PC-3 (cell line): ENCODE measurements at regions of chr9 and their contacts with region 1.

Region 1: DNA sequence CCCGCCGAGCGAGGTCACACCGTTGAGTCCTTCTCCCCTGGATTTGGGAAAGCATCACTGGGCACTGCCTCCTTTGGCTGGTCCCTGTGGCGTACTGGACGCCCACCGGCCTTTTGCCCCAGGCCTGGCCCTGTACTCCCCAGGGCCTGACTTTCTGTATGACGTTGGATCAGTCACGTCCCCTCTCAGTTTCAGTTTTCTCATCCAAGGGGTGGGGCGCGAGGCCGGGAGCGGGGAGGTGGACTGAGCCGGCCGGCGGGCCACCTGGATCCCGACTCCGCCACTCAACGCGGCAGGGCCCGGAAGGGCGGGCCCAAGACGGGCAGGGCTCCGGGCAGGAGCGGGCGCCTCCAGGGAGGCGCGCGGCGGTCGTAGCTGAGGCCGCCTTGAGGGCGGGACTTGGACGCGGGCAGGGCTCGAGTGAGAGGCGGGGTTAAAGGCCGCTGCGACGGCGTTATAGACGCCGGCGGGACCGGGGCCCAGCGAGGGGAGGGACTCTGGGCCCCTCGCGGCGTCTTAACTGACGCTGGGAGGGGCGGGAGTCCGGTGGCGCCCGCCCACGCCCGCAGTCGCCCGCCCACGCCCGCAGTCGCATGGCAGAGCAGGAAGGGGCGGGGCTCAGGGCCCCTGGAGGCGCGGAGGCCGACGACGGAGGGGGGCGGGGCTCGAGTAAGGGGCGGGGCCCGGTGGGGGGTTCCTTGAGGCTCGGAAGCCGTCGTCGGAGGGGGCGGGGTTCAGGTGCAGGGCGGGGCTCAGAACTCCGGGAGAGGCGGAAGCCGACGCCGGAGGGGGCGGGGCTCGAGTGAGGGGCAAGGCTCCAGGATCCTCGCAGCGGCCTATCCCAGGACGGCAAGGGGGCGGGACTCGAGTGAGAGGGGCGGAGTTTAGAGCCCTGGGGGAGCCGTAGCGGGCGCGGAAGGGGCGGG is 549 bp upstream of the CARD19 start:
- DNase-seq: peak; percentile 96
- ATAC-seq: peak; percentile 74
- H3K4me3 ChIP-seq: peak overlapping the region; percentile 64
- H3K27ac ChIP-seq: peak overlapping the region; percentile 75
- H3K4me1 ChIP-seq: peaks cover 28% of the 10 kb centered on the region
- H3K27me3 ChIP-seq: no peaks in the 10 kb centered on the region
- CTCF ChIP-seq: no peak

Region 2: DNA sequence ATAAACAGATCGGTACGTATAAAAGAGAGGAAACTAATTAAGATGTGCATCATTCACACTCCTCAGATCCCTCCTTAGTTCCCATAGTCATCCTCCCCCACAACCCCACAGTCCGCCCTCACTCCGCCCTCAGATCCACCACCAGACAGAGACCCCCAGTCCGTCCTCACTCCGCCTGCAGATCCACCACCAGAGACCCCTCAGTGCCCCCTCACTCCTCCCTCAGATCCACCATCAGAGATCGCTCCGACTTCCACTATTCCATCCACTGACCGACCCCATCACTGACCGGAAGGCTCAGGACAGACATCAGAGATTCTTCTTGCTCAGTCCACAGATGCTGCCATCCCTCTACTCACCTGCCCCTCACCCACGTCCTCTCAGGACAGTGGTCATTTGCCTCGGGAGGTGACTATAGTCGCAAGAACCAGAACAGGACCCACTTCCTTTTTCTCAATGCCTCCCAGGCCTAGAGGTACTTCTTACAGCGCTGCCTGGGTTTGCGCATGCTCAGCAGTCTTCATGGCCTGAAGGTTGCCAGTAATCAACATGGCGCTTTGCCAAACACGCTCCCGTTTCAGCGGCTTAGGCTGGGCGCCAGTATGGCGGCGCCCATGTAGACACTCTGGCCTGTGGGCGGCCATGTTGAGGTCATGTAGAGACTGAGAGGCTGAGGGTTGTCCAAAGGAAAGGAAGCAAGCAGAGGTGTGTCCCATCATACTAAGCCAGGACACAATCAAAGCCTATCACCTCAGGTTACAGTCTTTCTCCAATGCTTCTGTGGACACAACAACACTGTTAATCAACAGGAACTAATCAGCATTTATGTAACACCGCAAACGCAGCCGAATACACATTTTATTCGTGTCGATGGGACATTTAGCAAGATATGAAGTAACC is 217.7 kb before region 1 on chr9 and contains the start of gene ZNF484:
- CTCF ChIA-PET with region 1: no interaction called
- POLR2A ChIA-PET with region 1: no interaction called
- intact Hi-C with region 1: loop called (anchors 10 kb)
- DNase-seq: peak; percentile 98
- ATAC-seq: peak; percentile 99
- H3K4me3 ChIP-seq: peak within 1 kb of the TSS; percentile 96
- H3K27ac ChIP-seq: 0 out of 2 replicates have a peak within 1 kb of the TSS, but pooled peaks have one; percentile 24
- H3K4me1 ChIP-seq: peaks cover 12% of the 10 kb centered on the region; the same call in 1 of the 2 replicates
- H3K27me3 ChIP-seq: no peaks in the 10 kb centered on the region
- CTCF ChIP-seq: no peak
- total RNA-seq, gene ZNF484: 3.8 and 3.9 TPM in 2 replicates

Region 3: DNA sequence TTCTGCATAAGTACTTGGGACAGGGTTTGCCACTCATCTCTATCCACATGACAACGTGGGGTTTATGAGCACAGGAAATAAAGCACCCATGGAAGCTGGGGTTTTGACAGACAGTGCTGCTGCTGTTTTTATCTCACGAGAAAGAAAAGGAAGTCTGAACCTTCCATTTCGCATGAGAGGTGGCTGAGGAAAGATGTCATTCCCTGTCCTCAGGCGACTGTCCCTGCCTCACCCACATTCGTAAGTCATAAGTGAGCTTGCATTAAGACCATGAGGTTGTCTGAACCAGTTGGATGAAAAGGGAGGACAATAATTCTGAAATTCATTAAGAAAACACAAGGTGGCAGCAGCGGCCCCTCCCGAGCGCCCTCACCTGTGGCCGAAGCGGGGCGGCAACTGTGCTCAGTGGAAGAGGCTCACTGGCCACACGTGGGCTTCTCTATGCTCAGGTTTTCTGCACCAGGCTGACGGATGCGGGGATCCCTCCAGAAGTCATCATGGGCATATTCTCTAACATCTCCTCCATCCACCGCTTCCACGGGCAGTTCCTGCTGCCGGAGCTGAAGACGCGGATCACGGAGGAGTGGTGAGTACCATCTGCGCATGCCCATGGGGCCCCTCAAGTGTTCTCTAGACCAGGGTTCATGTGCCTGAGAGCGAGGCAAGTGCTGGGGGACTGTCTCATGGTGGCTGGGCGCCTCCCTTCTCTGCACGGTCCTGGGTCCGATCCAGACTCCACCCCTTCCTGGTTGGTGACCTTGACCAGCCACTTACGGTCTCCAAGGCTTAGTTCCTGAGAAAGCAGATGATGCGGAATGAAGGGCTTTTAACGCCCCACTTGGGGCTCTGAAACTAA is 91.7 kb before region 1 on chr9:
- CTCF ChIA-PET with region 1: no interaction called
- POLR2A ChIA-PET with region 1: no interaction called
- intact Hi-C with region 1: loop called (anchors 2 kb)
- DNase-seq: peak; percentile 72
- ATAC-seq: peak; percentile 94
- H3K4me3 ChIP-seq: peak overlapping the region; percentile 67
- H3K27ac ChIP-seq: no peak overlapping the region
- H3K4me1 ChIP-seq: peaks cover 4% of the 10 kb centered on the region; the same call in 1 of the 2 replicates
- H3K27me3 ChIP-seq: no peaks in the 10 kb centered on the region
- CTCF ChIP-seq: peak; percentile 75

Region 4: GRCh38 chr9:93061791-93062763 is 33.4 kb before region 1 on chr9:
- CTCF ChIA-PET with region 1: no interaction called
- POLR2A ChIA-PET with region 1: interaction called, 5 read pairs
- intact Hi-C with region 1: loop called (anchors 2 kb)
- DNase-seq: no peak
- ATAC-seq: no peak
- H3K4me3 ChIP-seq: no peak overlapping the region
- H3K27ac ChIP-seq: no peak overlapping the region
- H3K4me1 ChIP-seq: peaks cover 27% of the 10 kb centered on the region
- H3K27me3 ChIP-seq: no peaks in the 10 kb centered on the region
- CTCF ChIP-seq: no peak

Region 5: DNA sequence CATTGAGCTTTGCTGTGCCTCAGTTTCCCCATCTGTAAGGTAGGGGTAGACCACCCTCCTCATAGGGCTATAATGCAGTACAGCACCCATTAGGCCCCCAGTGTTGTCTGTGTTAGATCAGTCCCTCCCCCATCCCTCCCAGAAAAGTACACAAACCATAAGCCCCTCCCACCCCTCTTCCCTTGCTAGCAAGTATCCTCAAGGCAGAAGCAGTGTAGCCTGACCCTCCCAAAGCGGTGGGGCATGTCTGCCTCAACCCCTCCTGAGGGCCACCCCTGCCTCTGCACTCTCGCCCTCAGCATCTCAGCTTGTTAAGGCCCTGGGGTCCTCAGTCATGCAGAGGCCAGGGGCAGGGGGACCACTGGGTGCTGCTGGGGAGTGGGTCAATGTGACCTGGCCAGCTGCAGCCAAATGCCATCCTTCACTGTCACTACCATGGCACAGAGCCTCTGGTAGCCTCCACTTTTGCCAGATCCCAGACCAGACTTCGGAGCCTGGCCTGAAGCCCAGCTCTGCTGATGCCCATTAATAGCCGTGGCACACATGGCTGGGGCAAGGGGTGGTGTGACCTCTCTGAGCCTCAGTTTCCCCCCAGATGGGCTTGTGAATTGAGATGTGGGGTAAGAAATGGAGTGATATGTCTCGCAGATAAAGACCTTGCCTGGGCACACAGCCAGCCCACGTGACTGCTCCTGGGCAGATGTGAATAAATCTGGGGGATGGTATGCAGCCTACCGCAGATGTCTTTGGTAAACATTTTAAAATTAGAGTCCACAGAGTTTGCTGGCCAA is 23.3 kb before region 1 on chr9:
- CTCF ChIA-PET with region 1: no interaction called
- POLR2A ChIA-PET with region 1: no interaction called
- intact Hi-C with region 1: no loop called
- DNase-seq: no peak
- ATAC-seq: no peak
- H3K4me3 ChIP-seq: no peak overlapping the region
- H3K27ac ChIP-seq: no peak overlapping the region
- H3K4me1 ChIP-seq: no peaks in the 10 kb centered on the region
- H3K27me3 ChIP-seq: no peaks in the 10 kb centered on the region
- CTCF ChIP-seq: no peak